ENCODE measurements at regions of chr16 and their contacts with region 1.

Region 1: GRCh38 chr16:8868416-8869211 is at the start of gene CARHSP1:
- DNase-seq: peak; percentile 92
- H3K4me3 ChIP-seq: peak within 1 kb of the TSS; percentile 60 to 80 (median 75)
- H3K27ac ChIP-seq: peak within 1 kb of the TSS; percentile 64
- H3K4me1 ChIP-seq: peaks cover 20% of the 10 kb centered on the region
- H3K27me3 ChIP-seq: no peaks in the 10 kb centered on the region
- CTCF ChIP-seq: no peak
- POLR2A ChIP-seq: peak; percentile 72
- total RNA-seq, gene CARHSP1: 69.2 and 72.5 TPM in 2 replicates

Region 2: GRCh38 chr16:7716660-7717550 is 1151.7 kb before region 1 on chr16:
- CTCF ChIA-PET with region 1: no interaction called
- POLR2A ChIA-PET with region 1: no interaction called
- dilution Hi-C with region 1: no loop called
- intact Hi-C with region 1: no loop called
- DNase-seq: no peak
- H3K4me3 ChIP-seq: no peak overlapping the region
- H3K27ac ChIP-seq: no peak overlapping the region
- H3K4me1 ChIP-seq: no peaks in the 10 kb centered on the region
- H3K27me3 ChIP-seq: no peaks in the 10 kb centered on the region
- CTCF ChIP-seq: no peak
- POLR2A ChIP-seq: no peak

Region 3: DNA sequence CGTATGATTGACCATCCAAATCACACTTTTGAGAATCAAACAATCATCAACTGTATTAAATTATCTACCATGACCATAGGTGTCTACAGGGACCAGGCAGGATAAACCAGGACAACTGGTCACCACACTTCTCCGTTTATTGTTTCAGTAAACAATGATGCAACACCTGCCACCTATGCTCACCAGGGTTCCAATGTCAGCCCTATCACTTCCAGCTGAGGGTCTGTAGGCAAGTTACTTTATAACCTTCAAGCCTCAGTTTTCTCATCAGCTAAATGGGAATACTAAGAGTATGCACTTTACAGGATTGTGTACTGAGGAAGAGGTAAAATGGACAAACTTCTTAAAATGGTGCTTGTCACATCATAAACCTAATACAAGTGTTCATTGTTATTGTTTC is 293.2 kb before region 1 on chr16:
- CTCF ChIA-PET with region 1: no interaction called
- POLR2A ChIA-PET with region 1: no interaction called
- dilution Hi-C with region 1: no loop called
- intact Hi-C with region 1: no loop called
- DNase-seq: no peak
- H3K4me3 ChIP-seq: no peak overlapping the region
- H3K27ac ChIP-seq: no peak overlapping the region
- H3K4me1 ChIP-seq: no peaks in the 10 kb centered on the region
- H3K27me3 ChIP-seq: peaks cover 2 to 3% of the 10 kb centered on the region in 2 experiments
- CTCF ChIP-seq: no peak
- POLR2A ChIP-seq: no peak

Region 4: DNA sequence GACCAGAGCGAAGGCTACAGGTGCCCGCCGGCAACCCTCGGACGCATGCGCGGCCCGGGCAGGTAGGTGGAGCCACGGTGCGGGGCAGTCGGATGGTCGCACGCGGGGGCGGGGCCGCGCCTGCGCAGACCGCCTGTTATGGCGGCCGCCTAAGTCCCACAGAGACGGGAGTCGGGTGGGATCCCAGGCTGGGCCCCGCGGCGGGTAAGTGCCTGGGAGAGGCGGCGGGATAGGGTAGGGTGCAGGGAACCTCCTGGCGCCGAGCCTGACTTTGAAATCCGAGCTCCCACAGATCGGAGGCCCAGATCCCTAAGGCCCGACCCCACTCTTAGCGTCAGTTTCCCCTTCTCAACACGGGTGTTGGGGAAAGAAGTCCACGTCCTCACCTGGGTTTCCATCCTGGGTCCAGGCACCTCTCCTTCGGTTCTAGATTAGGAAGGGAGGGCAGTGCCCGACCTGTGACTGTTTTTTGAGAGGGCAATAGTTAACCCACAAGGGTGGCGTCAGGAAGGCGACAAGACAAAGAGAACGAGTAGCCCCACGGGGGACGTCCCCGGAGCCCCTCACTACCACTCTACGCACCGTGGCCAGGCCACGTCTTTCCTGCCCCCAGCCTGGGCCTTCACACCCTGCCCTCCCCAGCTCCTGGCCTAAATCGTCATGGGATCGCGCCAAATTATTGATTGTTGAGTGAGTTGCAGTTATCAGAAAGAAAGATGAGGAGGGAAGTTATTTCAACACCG is 246.9 kb before region 1 on chr16 and contains the start of gene METTL22:
- CTCF ChIA-PET with region 1: no interaction called
- POLR2A ChIA-PET with region 1: no interaction called
- dilution Hi-C with region 1: no loop called
- intact Hi-C with region 1: loop called (anchors 2 kb)
- DNase-seq: peak; percentile 87
- H3K4me3 ChIP-seq: peak within 1 kb of the TSS; percentile 77 to 96 (median 94)
- H3K27ac ChIP-seq: peak within 1 kb of the TSS; percentile 64
- H3K4me1 ChIP-seq: peaks cover 8% of the 10 kb centered on the region
- H3K27me3 ChIP-seq: peaks cover 0 to 9% of the 10 kb centered on the region in 2 experiments
- CTCF ChIP-seq: no peak
- POLR2A ChIP-seq: peak; percentile 88
- total RNA-seq, gene METTL22: 40.3 and 42.0 TPM in 2 replicates

Region 5: GRCh38 chr16:8797364-8798173 is 71.0 kb before region 1 on chr16 and contains the starts of genes PMM2 and TMEM186:
- CTCF ChIA-PET with region 1: interaction called, 4 read pairs
- POLR2A ChIA-PET with region 1: interaction called, 4 read pairs
- dilution Hi-C with region 1: no loop called
- intact Hi-C with region 1: loop called (anchors 1 kb)
- DNase-seq: peak; percentile 98
- H3K4me3 ChIP-seq: peak within 1 kb of the TSS; percentile 65 to 95 (median 83)
- H3K27ac ChIP-seq: peak within 1 kb of the TSS; percentile 62
- H3K4me1 ChIP-seq: peaks cover 25% of the 10 kb centered on the region
- H3K27me3 ChIP-seq: no peaks in the 10 kb centered on the region
- CTCF ChIP-seq: no peak
- POLR2A ChIP-seq: peak; percentile 86
- total RNA-seq, gene PMM2: 61.3 and 62.8 TPM in 2 replicates
- total RNA-seq, gene TMEM186: 8.3 and 9.6 TPM in 2 replicates

Region 6: DNA sequence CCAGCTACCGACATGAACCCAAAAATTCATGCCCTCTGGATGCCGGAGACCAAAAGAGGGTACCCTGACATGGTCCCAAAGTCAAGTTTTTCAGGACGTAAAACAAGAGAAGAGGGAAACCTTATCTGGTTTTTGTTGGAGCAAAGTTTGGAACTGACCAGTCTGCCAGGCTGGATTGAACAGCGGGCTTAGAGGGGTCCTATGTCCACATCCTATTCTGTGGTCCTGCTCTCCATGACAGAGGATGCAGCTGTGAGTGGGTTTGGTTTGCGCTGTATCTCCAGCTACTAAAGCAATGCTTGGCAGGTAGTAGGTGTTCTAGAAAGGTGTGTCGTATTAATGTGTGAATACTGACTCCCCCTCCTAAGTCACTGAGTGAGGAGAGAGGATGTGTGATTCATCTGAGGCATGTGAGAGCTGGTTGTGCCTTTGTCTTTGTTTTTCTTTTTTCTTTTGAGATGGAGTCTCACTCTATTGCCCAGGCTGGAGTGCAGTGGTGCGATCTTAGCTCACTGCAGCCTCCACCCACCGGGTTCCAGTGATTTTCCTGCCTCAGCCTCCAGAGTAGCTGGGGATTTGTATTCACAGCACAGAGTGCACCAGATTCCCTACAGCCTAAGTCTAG is 40.0 kb before region 1 on chr16:
- CTCF ChIA-PET with region 1: interaction called, 10 read pairs
- POLR2A ChIA-PET with region 1: interaction called, 4 read pairs
- dilution Hi-C with region 1: no loop called
- intact Hi-C with region 1: no loop called
- DNase-seq: peak; percentile 69
- H3K4me3 ChIP-seq: no peak overlapping the region
- H3K27ac ChIP-seq: peak overlapping the region; percentile 36
- H3K4me1 ChIP-seq: peaks cover 18% of the 10 kb centered on the region
- H3K27me3 ChIP-seq: no peaks in the 10 kb centered on the region
- CTCF ChIP-seq: no peak
- POLR2A ChIP-seq: no peak

Region 7: DNA sequence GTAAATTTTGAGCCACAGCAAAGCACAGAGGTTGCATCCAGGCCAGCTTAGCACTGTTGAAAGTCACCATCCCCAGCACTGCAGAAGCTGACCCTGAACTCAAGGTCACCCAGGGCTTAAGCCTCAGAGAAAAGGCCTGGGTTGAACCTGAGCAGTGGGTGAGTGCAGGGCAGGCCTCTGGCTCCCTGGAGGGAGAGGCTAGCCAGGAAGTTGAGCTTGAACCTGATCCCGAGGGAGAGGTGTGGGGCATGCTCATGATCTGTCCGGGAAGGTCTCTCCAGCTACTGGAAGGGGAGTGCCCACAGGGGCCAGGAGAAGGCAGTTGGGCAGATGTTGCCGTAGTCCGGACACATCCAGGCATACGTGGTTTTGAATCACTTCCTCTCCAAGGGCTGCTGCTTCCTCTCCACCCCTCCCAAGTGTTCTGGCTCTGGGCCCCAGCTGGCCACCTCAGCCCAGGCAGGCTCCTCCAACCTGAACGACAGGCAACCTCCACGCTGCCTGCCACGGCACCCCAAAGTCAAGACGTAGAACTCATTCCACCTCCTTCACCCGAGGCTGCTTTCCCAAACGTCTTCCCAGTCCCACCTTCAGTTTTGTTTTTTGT is 18.2 kb before region 1 on chr16:
- CTCF ChIA-PET with region 1: interaction called, 6 read pairs
- POLR2A ChIA-PET with region 1: interaction called, 9 read pairs
- dilution Hi-C with region 1: no loop called
- intact Hi-C with region 1: loop called (anchors 1 kb)
- DNase-seq: peak; percentile 87
- H3K4me3 ChIP-seq: no peak overlapping the region
- H3K27ac ChIP-seq: peak overlapping the region; percentile 27
- H3K4me1 ChIP-seq: peaks cover 23% of the 10 kb centered on the region
- H3K27me3 ChIP-seq: no peaks in the 10 kb centered on the region
- CTCF ChIP-seq: no peak
- POLR2A ChIP-seq: peak; percentile 62

Region 8: GRCh38 chr16:8998114-8998513 is 129.5 kb after region 1 on chr16:
- CTCF ChIA-PET with region 1: no interaction called
- POLR2A ChIA-PET with region 1: no interaction called
- dilution Hi-C with region 1: no loop called
- intact Hi-C with region 1: no loop called
- DNase-seq: no peak
- H3K4me3 ChIP-seq: no peak overlapping the region
- H3K27ac ChIP-seq: no peak overlapping the region
- H3K4me1 ChIP-seq: no peaks in the 10 kb centered on the region
- H3K27me3 ChIP-seq: no peaks in the 10 kb centered on the region
- CTCF ChIP-seq: no peak
- POLR2A ChIP-seq: no peak

Region 9: GRCh38 chr16:9039210-9039609 is 170.6 kb after region 1 on chr16:
- CTCF ChIA-PET with region 1: no interaction called
- POLR2A ChIA-PET with region 1: no interaction called
- dilution Hi-C with region 1: no loop called
- intact Hi-C with region 1: no loop called
- DNase-seq: no peak
- H3K4me3 ChIP-seq: no peak overlapping the region
- H3K27ac ChIP-seq: no peak overlapping the region
- H3K4me1 ChIP-seq: no peaks in the 10 kb centered on the region
- H3K27me3 ChIP-seq: no peaks in the 10 kb centered on the region
- CTCF ChIP-seq: no peak
- POLR2A ChIP-seq: no peak